ENCODE measurements at regions of chr9 and their contacts with region 1.

Region 1: GRCh38 chr9:89318123-89319014 is at the start of gene SECISBP2:
- DNase-seq: peak; percentile 89 to 97 (median 94)
- H3K4me3 ChIP-seq: peak within 1 kb of the TSS; percentile 56 to 96 (median 83)
- H3K27ac ChIP-seq: peak within 1 kb of the TSS; percentile 89 to 100 (median 99)
- H3K27me3 ChIP-seq: peaks cover 0 to 6% (median 0%) of the 10 kb centered on the region in 45 donors
- CTCF ChIP-seq: peak in 53 of 56 donors; percentile 65 to 87 (median 79)
- total RNA-seq, gene SECISBP2: 37.7 to 76.2 (median 54.3) TPM

Region 2: DNA sequence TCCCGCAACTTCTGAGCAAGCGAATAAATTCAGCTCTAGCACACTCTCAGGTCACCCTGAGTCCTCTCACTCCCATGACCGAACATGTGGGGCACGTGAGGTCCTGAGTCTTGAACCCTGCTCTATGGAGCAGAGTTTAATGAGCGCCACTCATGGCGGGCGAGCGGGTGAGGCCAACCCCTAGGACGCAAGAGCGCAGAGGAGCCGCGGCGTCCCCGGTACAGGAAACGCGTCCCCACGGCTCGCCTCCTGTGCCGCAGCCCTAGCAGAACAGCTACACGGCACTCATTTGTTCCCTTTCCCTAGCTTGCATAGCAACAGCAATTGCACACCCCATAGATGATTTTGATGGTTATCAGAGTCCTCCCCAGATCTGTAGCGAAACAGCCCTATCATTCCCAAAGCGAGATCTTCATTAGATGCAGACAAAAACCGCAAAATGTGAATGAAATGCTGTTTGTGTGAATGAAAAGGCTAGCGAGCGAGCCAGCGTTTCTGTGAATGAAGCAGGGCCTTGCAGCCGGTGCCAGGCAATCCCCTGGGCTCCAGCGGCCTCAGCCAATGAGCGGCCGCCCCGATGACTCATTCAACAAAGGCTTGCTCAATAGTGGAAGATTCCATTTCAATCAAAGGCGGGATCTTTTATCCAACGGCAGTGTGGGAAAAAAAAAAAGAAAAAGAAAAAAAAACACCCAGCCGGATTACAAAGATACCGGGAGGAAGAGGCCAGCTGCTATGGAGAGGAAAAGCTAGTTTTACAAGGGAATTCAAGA is 138.3 kb before region 1 on chr9:
- intact Hi-C with region 1: loop called in 1 of 2 experiments (anchors 2 kb)
- DNase-seq: peak; percentile 85 to 97 (median 94)
- H3K4me3 ChIP-seq: peak overlapping the region; percentile 28 to 82 (median 64)
- H3K27ac ChIP-seq: peak overlapping the region in 57 of 59 donors; percentile 8 to 91 (median 79)
- H3K27me3 ChIP-seq: peaks cover 0 to 40% (median 10%) of the 10 kb centered on the region in 45 donors
- CTCF ChIP-seq: peak in 4 of 56 donors; percentile 11 to 31 (median 14)

Region 3: GRCh38 chr9:89353989-89354388 is 35.6 kb after region 1 on chr9:
- intact Hi-C with region 1: no loop called
- DNase-seq: no peak
- H3K4me3 ChIP-seq: no peak overlapping the region
- H3K27ac ChIP-seq: peak overlapping the region in 1 of 59 donors; percentile 26
- H3K27me3 ChIP-seq: no peaks in the 10 kb centered on the region
- CTCF ChIP-seq: no peak

Region 4: GRCh38 chr9:89437000-89437631 is 118.7 kb after region 1 on chr9:
- intact Hi-C with region 1: loop called in 1 of 2 experiments (anchors 10 kb)
- DNase-seq: no peak
- H3K4me3 ChIP-seq: peak overlapping the region in 6 of 59 donors; percentile 0 to 64 (median 34)
- H3K27ac ChIP-seq: peak overlapping the region; percentile 62 to 100 (median 92)
- H3K27me3 ChIP-seq: no peaks in the 10 kb centered on the region
- CTCF ChIP-seq: no peak

Region 5: DNA sequence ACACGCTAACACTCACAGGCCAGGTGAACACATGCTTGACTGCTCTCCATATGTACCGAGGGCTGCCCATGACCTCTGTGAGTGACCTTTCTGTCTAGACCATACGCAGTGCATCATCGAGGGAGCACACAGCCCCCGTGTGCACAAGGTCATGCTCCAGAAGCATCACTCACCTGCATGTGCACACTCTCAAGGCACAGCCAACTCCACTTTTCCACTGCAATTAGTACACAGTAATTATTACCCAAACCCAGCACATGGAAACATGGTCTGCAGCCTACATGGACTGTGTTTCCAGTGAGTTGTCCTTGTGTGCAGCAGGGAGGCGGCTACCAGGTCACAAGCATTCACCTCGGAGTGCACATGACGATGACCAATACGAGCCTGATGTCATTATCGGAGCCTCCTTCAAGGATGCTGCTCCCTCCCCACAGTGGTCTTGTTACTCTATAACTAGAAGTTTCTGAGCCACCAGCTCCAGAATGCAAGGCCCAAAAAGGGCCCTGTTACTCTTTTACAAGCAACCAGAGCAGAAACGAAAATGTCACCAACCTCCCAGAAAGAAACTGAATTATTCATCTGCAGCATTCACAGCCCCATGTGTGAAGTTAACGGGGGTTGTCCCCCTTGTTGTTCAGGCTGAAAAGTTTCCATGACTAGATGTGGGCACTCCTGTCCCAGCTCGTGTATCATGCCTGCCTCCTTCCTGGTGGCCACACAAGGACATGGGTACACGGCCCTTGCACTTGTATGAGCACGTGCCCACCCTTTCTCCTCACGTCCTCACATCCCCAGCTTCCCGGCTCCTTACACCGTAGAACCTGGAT is 148.3 kb after region 1 on chr9:
- intact Hi-C with region 1: loop called in 1 of 2 experiments (anchors 10 kb)
- DNase-seq: peak in 2 of 10 donors; percentile 3 to 17
- H3K4me3 ChIP-seq: no peak overlapping the region
- H3K27ac ChIP-seq: peak overlapping the region in 26 of 59 donors; percentile 21 to 100 (median 66)
- H3K27me3 ChIP-seq: no peaks in the 10 kb centered on the region
- CTCF ChIP-seq: no peak

Region 6: DNA sequence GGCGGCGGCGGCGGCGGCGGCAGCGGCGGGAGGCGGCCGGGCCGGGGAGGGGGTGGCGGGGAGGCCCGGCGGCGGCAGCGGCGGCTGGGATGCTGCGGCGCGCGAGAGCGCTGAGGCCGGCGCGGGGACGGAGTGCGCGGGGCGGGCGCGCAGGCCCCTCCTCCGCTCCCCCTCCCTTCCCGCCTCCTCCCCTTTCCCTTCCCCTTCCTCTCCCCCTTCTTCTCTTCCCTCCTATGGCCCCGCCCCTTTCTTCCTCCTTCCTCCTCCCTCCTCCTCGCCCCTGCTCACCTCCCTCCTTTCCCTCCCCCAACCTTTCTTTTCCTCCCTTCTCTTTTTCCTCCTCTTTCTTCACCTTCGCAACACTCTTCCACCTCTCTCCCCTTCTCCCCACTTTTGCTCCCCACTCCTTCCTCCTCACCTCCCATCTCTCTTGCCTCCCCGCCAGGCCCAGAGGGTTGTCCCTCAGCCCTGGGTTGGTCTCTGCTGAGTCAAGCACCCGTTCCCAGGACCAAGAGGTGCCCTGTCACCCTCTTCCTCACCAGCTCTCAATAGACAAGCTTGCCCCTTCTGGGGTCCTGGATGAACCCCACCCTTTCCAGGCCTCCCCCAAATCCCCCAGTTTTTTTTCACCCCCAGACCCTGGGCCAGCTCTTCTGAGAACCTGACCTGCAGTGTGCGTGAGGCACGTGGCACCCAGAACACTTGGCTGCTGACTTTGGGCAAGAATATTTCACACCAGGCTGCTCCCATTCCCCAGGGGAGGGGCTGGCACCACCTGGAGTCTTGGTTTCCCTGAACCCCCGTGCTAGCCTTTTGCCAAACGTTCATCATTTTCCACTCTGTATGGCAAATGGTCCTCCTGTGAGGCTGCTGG is 179.8 kb after region 1 on chr9 and contains the start of gene SEMA4D:
- intact Hi-C with region 1: loop called in 1 of 2 experiments (anchors 5 kb)
- DNase-seq: peak; percentile 54 to 88 (median 69)
- H3K4me3 ChIP-seq: peak within 1 kb of the TSS; percentile 52 to 87 (median 76)
- H3K27ac ChIP-seq: peak within 1 kb of the TSS; percentile 63 to 96 (median 90)
- H3K27me3 ChIP-seq: no peaks in the 10 kb centered on the region
- CTCF ChIP-seq: no peak
- total RNA-seq, gene SEMA4D: 90.5 to 697 (median 192) TPM

Region 7: DNA sequence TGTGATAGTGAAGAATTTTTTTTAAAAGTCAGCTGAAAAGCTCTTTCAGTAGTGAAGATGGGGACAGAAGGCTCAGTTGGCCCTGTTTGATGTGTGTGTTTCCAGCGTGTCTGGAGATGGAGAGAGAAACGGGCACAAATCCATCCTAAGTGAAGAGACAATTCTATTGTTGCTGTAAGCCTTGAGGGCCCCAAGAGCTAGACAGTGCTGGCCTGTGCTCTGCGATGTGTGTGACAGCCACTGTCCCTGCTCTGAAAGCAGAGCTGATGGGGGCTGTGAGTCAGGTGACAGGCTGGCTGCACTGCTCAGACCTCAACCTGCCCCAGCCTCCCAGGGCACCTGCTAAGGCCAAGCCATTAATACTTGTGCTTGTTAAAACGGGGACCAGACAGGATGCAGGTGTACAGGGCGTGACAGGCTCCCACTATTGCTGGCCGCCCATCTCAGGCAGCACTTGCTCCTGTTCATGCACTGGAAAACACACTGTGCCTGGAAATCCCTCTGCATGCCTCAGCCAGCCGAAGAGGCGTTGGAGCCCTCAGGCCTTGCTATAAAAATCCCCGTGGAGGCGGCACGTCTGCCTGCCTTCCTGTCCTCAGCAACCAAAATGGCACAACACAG is 224.1 kb after region 1 on chr9:
- intact Hi-C with region 1: loop called (anchors 2 to 5 kb)
- DNase-seq: peak; percentile 9 to 88 (median 80)
- H3K4me3 ChIP-seq: peak overlapping the region in 13 of 59 donors; percentile 2 to 46 (median 13)
- H3K27ac ChIP-seq: peak overlapping the region; percentile 58 to 98 (median 92)
- H3K27me3 ChIP-seq: no peaks in the 10 kb centered on the region
- CTCF ChIP-seq: peak in 4 of 56 donors; percentile 1 to 33 (median 12)

Region 8: GRCh38 chr9:89549031-89549644 is 230.8 kb after region 1 on chr9:
- intact Hi-C with region 1: loop called in 1 of 2 experiments (anchors 5 kb)
- DNase-seq: peak in 9 of 10 donors; percentile 61 to 85 (median 75)
- H3K4me3 ChIP-seq: no peak overlapping the region
- H3K27ac ChIP-seq: peak overlapping the region in 30 of 59 donors; percentile 1 to 77 (median 50)
- H3K27me3 ChIP-seq: no peaks in the 10 kb centered on the region
- CTCF ChIP-seq: peak; percentile 58 to 100 (median 94)